Dorsolateral prefrontal cortex (tissue), 120 donors: ENCODE measurements at regions of chr11 and their contacts with region 1.

Region 1: DNA sequence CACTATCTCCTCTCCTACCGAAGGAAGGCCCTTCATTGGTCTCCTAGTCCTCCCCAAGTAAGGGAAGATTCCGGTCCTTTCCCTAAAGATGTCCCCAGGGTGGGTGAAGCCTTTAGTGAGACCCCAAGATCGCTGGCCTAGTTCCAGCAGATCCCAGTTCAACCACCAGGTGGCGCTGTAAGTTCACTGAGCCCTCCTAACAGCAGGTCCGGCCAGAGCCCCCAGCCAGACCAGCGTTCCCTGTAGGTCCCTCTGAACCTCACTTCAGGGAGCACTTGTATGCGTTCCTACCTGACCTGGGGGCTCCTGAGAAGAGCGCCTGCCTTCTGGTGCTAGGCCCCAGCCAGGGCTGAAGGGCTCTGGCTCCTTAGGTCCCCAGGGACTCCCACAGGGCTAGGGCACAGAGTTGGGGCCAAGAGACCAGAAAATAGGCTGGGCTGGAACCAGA is 38.1 kb downstream of the LMO1 start:
- DNase-seq: peak; percentile 62 to 91 (median 80)
- H3K4me3 ChIP-seq: no peak overlapping the region
- H3K27ac ChIP-seq: no peak overlapping the region
- H3K27me3 ChIP-seq: peaks cover 0 to 7% (median 0%) of the 10 kb centered on the region in 45 donors
- CTCF ChIP-seq: peak; percentile 93 to 100 (median 99)

Region 2: DNA sequence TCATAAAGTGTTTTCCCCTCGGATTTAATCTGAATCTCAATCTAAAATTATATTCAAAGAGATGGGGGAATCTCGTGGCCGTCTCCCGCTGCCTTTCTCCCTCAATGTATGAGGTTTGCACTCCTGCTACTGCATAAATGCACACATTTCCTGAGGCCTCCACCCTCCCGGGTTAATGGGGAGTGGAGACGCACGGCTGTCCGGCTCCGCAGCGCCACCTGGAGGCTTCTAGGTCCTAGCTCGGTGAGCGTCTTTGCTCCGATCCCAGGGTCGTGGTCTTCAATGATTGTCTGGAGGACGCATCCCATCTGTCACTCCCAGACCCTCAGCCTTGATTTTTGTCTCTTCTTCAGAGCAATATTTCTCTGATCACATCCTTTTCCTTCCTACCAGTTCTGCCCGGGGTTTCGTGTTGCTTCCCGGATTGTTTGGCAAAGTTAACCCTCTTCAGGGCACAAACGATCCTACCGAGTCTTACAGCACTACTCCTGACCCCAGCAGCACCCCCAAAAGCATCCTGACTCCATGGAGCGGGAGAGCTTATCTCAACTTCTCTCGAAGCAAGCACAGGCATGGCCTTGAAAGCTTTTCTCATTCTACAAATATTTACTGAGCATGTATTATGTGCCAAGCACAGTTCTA is 38.3 kb after region 1 on chr11 and contains the start of gene LMO1:
- intact Hi-C with region 1: loop called (anchors 1 kb)
- DNase-seq: peak; percentile 69 to 90 (median 84)
- H3K4me3 ChIP-seq: peak within 1 kb of the TSS; percentile 29 to 78 (median 63)
- H3K27ac ChIP-seq: peak within 1 kb of the TSS in 7 of 59 donors; percentile 13 to 61 (median 30)
- H3K27me3 ChIP-seq: peaks cover 0 to 52% (median 28%) of the 10 kb centered on the region in 45 donors
- CTCF ChIP-seq: peak; percentile 67 to 95 (median 88)
- total RNA-seq, gene LMO1: 0.53 to 6.6 (median 3.0) TPM

Region 3: DNA sequence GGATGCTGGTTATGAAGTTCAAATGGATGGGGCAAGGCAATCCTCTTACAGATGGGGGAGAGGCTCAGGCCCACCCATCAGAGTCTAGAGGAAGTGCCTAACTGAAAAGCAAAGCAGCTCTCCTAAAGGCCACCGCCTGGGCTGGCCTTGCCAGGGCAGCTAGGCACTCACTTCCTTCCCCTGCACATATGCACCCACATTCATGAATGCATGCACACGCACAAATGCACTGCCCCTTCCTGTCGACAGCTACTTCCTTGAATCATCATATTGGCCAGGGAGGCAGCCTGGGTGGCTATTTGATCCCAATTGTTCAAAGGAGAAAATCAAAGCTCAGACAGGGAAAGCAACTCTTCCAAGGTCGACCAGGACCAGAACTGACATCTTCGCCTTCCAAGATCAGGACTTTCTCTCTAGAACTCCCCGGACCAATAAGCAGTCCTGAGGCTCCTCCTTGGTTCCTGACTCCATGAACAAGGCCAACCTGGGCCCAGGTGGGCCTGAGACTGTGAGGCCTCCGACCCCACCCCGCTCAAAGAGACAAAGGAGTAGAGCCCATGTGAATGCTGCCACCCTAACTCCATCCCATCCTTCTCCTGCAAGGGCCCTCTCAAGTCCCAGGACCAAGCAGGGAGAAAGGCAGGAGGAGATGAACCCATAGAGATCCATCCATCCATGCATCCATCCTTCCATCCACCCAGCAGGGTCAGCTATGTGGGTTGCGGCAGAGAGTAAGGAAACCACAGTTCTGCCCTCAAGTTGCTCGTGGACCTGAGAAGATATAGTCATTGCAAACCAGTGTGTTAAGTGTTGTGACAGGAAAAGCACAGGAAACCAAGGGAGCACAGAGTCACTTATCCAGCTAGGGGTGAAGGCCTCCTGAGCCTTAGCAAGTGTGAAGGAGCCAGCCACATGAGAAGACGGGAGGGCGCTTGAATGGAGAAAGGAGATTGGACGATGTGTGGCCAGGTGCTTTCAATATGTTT is 73.5 kb after region 1 on chr11:
- intact Hi-C with region 1: no loop called
- DNase-seq: peak in 4 of 10 donors; percentile 0 to 32 (median 12)
- H3K4me3 ChIP-seq: no peak overlapping the region
- H3K27ac ChIP-seq: no peak overlapping the region
- H3K27me3 ChIP-seq: no peaks in the 10 kb centered on the region
- CTCF ChIP-seq: no peak

Region 4: GRCh38 chr11:8318336-8318935 is 92.8 kb after region 1 on chr11:
- intact Hi-C with region 1: loop called in 1 of 2 experiments (anchors 10 kb)
- DNase-seq: peak in 2 of 10 donors; percentile 9 to 25
- H3K4me3 ChIP-seq: no peak overlapping the region
- H3K27ac ChIP-seq: no peak overlapping the region
- H3K27me3 ChIP-seq: peaks cover 0 to 11% (median 0%) of the 10 kb centered on the region in 45 donors
- CTCF ChIP-seq: peak in 28 of 56 donors; percentile 9 to 52 (median 24)

Region 5: GRCh38 chr11:8566613-8567210 is 341.1 kb after region 1 on chr11:
- intact Hi-C with region 1: loop called (anchors 2 to 10 kb)
- DNase-seq: no peak
- H3K4me3 ChIP-seq: no peak overlapping the region
- H3K27ac ChIP-seq: no peak overlapping the region
- H3K27me3 ChIP-seq: peaks cover 0 to 3% (median 0%) of the 10 kb centered on the region in 45 donors
- CTCF ChIP-seq: peak; percentile 60 to 95 (median 81)